Dendritic cell treated with granulocyte-macrophage colony-stimulating factor and Interleukin-4, amounts not matched to agents 40 ng/mL and 50 ng/mL, for 4 days (primary cell): ENCODE measurements at regions of chr6 and their contacts with region 1.

Region 1: DNA sequence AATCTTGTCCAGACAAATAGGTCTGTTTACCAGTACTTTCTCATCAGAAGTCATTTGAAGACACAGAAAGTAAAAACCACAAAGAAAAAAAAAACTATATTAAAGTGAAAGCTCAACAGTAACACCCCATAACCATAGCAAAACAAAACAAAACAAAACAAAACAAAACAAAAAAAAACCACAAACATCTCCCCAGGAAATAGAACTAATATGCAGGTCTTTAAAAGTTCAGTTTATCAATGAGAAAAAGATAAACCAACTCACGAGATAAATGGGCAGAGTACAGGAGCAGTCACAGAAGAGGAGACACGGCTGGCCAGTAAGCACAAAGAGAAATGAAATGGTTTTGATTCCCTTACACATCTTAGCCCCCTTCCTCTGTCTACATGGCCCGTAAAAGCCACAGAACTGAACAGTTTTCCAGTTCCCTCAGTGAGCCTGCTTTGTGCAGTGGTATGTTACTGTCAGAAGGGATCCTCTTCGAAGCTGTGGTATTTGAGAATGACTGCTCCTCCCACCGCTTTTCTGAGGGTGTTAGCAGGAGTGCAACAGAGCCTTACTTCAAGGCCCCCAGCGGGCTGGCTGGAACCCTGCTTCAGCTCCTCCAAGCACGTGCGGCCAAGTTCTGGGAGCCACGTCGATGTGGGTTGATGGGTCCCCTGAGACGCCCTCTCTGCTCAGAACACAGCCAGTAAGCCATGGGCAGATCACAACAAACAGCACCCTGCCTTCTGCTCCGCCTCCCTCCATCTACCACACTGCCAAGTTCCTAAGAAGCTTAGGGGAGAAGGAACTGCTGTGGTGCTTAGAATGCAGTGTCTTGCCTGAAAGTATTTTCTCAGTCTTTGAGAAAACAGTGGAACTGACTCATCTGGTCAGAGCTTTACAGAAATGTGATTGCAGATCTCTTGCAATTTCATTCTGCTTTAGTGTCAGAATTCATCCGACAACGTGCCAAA is 14.0 kb downstream of the UST start:
- H3K4me3 Mint-ChIP-seq: peak overlapping the region; percentile 78
- H3K27ac Mint-ChIP-seq: peak overlapping the region; percentile 94
- H3K4me1 Mint-ChIP-seq: peaks cover 74% of the 10 kb centered on the region
- H3K27me3 Mint-ChIP-seq: peaks cover 8% of the 10 kb centered on the region

Region 2: GRCh38 chr6:148746363-148747144 is 14.3 kb before region 1 on chr6 and contains the start of gene UST:
- intact Hi-C with region 1: loop called (anchors 2 kb)
- H3K4me3 Mint-ChIP-seq: peak within 1 kb of the TSS; percentile 93
- H3K27ac Mint-ChIP-seq: peak within 1 kb of the TSS; percentile 89
- H3K4me1 Mint-ChIP-seq: peaks cover 18% of the 10 kb centered on the region
- H3K27me3 Mint-ChIP-seq: peaks cover 76% of the 10 kb centered on the region

Region 3: DNA sequence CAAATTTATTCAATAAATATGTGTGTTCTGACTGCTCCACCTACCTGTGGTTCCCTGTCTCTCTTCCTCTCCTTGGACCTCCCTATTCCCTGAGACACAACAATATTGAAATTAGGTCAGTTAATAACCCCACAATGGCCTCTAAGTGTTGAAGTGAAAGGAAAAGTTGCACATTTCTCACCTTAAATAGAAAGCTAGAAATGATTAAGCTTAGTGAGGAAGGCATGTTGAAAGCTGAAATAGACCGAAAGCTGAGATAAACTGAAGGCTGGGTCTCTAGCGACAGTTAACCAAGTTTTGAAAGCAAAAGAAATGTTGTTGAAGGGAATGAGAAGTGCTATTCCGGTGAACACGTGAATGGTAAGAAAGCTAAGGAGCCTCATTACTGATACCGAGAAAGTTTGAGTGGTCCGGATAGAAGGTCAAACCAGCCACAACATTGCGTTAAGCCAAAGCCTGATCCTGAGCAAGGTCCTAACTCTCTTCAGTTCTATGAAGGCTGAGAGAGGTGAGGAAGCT is 20.1 kb after region 1 on chr6:
- intact Hi-C with region 1: loop called (anchors 2 kb)
- H3K4me3 Mint-ChIP-seq: no peak overlapping the region
- H3K27ac Mint-ChIP-seq: no peak overlapping the region
- H3K4me1 Mint-ChIP-seq: peaks cover 26% of the 10 kb centered on the region
- H3K27me3 Mint-ChIP-seq: peaks cover 10% of the 10 kb centered on the region